ENCODE measurements at regions of chr6 and their contacts with region 1.

Region 1: GRCh38 chr6:10014557-10014956 is 400.3 kb downstream of the TFAP2A start:
- DNase-seq: no peak
- ATAC-seq: no peak
- H3K4me3 ChIP-seq: no peak overlapping the region
- H3K27ac ChIP-seq: no peak overlapping the region
- H3K4me1 ChIP-seq: no peaks in the 10 kb centered on the region
- H3K27me3 ChIP-seq: peaks cover 69% of the 10 kb centered on the region
- CTCF ChIP-seq: no peak

Region 2: DNA sequence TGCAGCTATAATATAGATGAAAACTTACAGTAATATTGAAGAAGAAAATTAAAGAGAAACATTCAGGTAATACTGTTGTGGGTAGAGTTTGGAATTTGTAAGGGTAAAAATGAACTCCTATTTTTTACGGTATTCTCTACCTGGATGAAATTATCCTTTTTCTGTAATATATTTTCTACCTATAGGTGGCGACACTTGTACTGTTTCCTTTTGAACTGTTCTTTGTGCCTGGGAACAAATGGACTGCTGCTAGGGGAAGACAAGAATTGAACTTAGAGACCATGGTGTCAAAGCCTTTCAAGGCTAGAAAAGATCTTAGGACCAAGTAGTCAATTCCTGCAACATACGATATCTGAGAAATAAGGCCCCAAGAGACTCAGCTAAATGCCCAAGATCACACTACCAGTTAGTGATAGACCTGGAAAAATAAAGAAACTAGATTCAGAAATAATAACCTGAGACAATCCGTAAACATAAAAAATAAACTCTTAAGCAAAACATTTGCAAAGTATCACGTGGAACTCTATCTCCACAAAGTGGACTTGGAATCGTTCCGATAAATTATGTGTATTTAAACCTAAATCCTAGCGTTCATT is 16.5 kb after region 1 on chr6:
- CTCF ChIA-PET with region 1: no interaction called
- POLR2A ChIA-PET with region 1: interaction called, 14 read pairs
- intact Hi-C with region 1: no loop called
- DNase-seq: peak; percentile 71
- ATAC-seq: no peak
- H3K4me3 ChIP-seq: no peak overlapping the region
- H3K27ac ChIP-seq: no peak overlapping the region
- H3K4me1 ChIP-seq: peaks cover 16% of the 10 kb centered on the region
- H3K27me3 ChIP-seq: peaks cover 31% of the 10 kb centered on the region
- CTCF ChIP-seq: peak; percentile 79

Measured in PC-3 (cell line).